ENCODE measurements at regions of chr2 and their contacts with region 1.

Region 1: DNA sequence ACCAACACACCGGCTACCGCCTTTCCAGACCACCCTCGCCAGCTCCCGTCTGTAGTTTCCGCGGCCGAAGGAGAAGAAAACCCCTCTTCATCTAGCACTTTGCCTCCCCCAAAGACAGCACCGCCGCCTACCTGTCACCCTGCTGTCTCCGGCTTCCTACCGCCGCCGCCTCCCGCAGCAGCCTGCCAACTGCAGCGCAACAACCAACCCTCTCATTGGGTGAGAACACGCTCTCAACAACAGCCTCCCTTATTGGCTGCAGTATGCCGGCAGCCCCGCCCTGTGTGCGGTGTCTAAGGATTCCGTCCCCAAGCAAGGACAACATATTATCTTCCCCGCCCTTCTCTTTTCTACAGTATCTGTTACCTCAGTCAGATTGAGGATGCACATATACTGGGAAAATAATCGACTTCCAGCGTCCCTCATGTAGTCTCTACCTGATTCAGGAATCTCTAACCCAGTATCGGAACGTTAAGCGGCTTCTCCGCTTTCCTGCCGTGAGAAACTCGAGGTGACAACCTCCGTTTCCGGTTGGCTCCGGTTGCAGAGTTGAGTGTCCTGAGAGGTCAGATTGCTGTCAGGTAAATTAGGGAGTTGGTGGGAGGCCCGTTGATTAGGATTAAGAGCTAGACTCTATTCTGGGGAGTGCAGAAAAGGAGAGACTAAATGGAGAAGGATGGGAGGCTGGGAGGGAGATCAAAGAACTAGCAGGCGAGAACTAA is at the starts of genes HYCC2 and NDUFB3:
- DNase-seq: peak; percentile 95
- ATAC-seq: peak; percentile 97
- H3K4me3 Mint-ChIP-seq: peak within 1 kb of the TSS; percentile 90
- H3K27ac Mint-ChIP-seq: peak within 1 kb of the TSS; percentile 93
- H3K4me1 Mint-ChIP-seq: peaks cover 48% of the 10 kb centered on the region
- H3K27me3 Mint-ChIP-seq: no peaks in the 10 kb centered on the region
- CTCF ChIP-seq: no peak
- total RNA-seq, gene HYCC2: 24.7 to 26.9 TPM
- total RNA-seq, gene NDUFB3: 134 to 140 TPM

Region 2: DNA sequence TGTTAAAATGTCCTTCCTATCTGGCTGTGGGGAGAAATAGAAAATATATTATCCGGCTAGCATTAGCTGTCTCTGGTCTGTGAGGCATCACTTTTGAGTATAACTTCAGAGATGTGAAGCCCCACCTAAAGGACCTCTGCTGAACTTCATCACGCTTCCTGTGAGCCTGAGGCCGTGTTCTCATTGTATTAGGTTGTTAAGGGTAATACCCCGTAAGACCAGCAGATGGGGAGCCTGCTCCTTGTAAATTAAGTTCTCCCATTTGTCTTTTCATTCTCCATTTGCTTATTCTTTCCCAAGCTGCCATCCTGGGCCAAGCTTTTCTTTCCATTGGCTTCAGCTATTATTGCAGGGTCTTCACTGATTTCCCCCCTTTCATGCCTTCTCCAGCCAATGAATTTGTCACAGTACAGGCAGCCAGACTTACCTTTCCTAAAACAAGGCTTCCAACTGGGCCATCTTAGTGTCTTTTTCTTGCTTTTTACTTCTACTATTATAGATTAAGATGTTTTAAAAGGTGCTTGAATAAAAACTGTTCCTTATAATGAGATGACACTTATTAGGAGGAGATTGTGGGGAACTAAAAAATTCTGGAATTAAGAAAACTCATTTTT is 170.1 kb before region 1 on chr2:
- CTCF ChIA-PET with region 1: interaction called, 70 read pairs
- POLR2A ChIA-PET with region 1: interaction called, 3 read pairs
- intact Hi-C with region 1: loop called (anchors 5 kb)
- DNase-seq: peak; percentile 90
- ATAC-seq: peak; percentile 100
- H3K4me3 Mint-ChIP-seq: no peak overlapping the region
- H3K27ac Mint-ChIP-seq: peak overlapping the region; percentile 72
- H3K4me1 Mint-ChIP-seq: peaks cover 19% of the 10 kb centered on the region
- H3K27me3 Mint-ChIP-seq: no peaks in the 10 kb centered on the region
- CTCF ChIP-seq: peak; percentile 95

Region 3: DNA sequence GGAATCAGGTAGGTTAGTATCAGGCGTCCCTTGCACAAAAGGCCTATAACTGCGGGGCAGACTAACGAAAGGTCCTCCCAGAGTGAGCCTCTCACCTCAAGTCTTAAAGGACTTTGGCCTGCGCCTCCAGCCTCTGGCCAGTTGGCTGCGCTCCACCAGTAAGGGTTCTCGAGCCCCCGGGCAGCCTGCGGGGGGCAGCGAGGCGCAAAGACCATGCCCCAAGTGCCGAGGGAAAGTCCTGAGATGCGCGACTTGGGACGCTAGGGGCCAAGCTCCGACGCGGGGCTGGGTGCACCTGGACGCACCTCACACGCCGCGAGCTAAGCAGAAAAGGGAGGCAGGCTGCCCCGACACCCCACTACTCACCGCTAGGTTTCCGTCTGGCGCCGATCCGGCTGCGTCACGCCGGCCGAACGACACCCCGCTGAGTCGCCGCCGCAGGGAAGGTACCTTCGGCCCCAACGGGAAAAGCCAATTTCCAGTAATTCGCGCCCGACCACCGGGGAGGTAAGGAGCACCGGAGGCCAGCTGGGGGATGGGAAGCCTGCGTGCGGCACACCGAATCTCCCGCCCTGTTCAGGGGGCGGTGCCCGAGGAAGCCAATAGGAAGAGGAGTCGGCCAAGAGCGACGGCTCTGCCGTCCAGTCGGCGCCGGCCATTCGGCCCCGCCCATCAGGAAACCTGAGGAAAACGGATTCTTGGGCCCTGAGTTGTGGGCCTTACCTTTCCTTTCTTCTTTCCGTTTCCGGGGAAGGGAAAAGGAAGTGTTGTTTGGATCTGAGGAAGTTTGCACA is 108.3 kb before region 1 on chr2 and contains the start of gene ORC2:
- CTCF ChIA-PET with region 1: interaction called, 64 read pairs
- POLR2A ChIA-PET with region 1: interaction called, 4 read pairs
- intact Hi-C with region 1: loop called (anchors 5 kb)
- DNase-seq: peak; percentile 94
- ATAC-seq: peak; percentile 97
- H3K4me3 Mint-ChIP-seq: peak within 1 kb of the TSS; percentile 92
- H3K27ac Mint-ChIP-seq: peak within 1 kb of the TSS; percentile 96
- H3K4me1 Mint-ChIP-seq: peaks cover 55% of the 10 kb centered on the region
- H3K27me3 Mint-ChIP-seq: no peaks in the 10 kb centered on the region
- CTCF ChIP-seq: peak; percentile 87
- total RNA-seq, gene ORC2: 51.3 to 59.2 TPM

Region 4: GRCh38 chr2:201118121-201118960 is 46.7 kb after region 1 on chr2:
- CTCF ChIA-PET with region 1: interaction called, 36 read pairs
- POLR2A ChIA-PET with region 1: interaction called, 42 read pairs
- intact Hi-C with region 1: loop called (anchors 5 kb)
- DNase-seq: peak; percentile 97
- ATAC-seq: peak; percentile 45
- H3K4me3 Mint-ChIP-seq: peak overlapping the region; percentile 95
- H3K27ac Mint-ChIP-seq: peak overlapping the region; percentile 92
- H3K4me1 Mint-ChIP-seq: peaks cover 43% of the 10 kb centered on the region
- H3K27me3 Mint-ChIP-seq: no peaks in the 10 kb centered on the region
- CTCF ChIP-seq: peak; percentile 43

Region 5: DNA sequence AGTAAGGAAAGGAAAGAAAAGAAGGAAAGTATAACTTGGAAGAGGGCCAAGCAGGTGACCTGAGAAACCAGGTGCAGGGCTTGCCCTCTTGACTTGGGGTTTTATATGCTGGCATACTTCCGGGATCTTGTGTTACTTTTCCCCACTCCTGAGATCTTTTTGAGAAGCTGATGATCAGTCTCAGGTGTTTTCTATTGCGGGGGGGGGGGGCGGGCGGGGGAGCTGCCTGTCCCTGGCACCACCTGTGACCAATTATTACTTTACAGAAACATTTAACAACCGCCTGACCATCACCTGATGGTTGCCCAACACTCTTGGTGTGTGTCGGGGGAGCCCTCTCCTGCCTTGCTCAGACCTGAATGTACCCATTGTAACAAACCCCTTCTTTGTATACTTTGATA is 104.4 kb after region 1 on chr2:
- CTCF ChIA-PET with region 1: interaction called, 24 read pairs
- POLR2A ChIA-PET with region 1: no interaction called
- intact Hi-C with region 1: loop called (anchors 5 kb)
- DNase-seq: no peak
- ATAC-seq: no peak
- H3K4me3 Mint-ChIP-seq: no peak overlapping the region
- H3K27ac Mint-ChIP-seq: no peak overlapping the region
- H3K4me1 Mint-ChIP-seq: peaks cover 16% of the 10 kb centered on the region
- H3K27me3 Mint-ChIP-seq: no peaks in the 10 kb centered on the region
- CTCF ChIP-seq: no peak

Region 6: DNA sequence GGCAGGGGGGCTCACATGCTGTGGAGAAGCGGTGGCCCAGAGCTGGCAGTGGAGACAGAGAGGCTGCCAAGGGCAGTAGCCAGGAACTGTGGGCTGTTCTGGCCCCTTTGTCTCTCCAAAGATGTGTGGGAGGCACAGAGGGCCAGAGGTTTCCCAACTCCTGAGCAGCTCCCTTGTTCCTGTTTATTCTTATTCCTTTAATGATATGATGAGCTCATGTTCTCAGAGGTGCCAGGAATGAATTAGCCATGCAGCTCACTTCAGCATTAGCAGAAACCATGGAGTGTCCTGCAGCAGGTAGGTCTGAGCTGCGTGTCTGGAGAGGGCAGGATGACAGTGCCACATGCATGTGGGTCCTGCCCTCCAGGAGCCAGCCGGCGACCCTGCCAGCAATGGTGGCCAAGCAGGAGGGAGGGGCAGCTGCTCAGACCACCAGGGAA is 884.1 kb after region 1 on chr2:
- CTCF ChIA-PET with region 1: no interaction called
- POLR2A ChIA-PET with region 1: no interaction called
- intact Hi-C with region 1: no loop called
- DNase-seq: no peak
- ATAC-seq: no peak
- H3K4me3 Mint-ChIP-seq: no peak overlapping the region
- H3K27ac Mint-ChIP-seq: no peak overlapping the region
- H3K4me1 Mint-ChIP-seq: no peaks in the 10 kb centered on the region
- H3K27me3 Mint-ChIP-seq: peaks cover 11% of the 10 kb centered on the region
- CTCF ChIP-seq: no peak

Measured in activated CD8-positive, alpha-beta T cell treated with anti-CD3 and anti-CD28 coated beads for 36 hours (primary cell).